HepG2 (cell line): ENCODE measurements at regions of chr2 and their contacts with region 1.

Region 1: DNA sequence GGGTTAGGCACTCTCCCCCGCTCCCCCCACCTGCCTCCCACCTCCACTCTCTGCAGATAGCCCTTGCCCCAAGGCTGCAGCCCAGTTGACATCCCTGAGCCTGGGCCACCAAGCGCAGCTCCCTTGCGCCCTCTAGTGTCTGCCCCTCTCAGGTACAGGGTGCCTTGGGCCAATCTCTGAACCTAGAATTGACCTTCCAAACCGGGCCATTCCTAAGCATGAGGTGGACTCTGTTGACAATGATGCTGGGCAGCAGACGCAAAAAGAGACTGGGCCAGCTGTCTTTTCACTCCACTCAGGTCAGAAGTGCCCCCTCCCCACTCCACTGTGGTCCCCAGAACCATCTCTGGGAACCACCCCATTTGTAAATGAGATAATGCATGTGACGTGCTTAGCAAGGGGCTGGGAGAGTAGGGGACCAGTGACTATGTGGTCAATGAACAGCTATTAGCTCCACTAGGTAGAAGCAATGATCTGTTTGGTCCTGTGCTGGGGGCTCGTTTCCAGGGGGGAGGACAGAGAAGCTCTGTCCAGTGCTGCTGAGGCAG is 43.3 kb upstream of the PLB1 start:
- DNase-seq: peak; percentile 58
- ATAC-seq: peak; percentile 92
- H3K4me3 ChIP-seq: no peak overlapping the region
- H3K27ac ChIP-seq: no peak overlapping the region
- H3K4me1 ChIP-seq: no peaks in the 10 kb centered on the region
- H3K27me3 ChIP-seq: peaks cover 0 to 7% of the 10 kb centered on the region in 2 experiments; a peak in 3 of 5 replicates
- CTCF ChIP-seq: peak; percentile 99
- EP300 ChIP-seq: no peak
- POLR2A ChIP-seq: no peak
- RAD21 ChIP-seq: peak; percentile 91

Region 2: DNA sequence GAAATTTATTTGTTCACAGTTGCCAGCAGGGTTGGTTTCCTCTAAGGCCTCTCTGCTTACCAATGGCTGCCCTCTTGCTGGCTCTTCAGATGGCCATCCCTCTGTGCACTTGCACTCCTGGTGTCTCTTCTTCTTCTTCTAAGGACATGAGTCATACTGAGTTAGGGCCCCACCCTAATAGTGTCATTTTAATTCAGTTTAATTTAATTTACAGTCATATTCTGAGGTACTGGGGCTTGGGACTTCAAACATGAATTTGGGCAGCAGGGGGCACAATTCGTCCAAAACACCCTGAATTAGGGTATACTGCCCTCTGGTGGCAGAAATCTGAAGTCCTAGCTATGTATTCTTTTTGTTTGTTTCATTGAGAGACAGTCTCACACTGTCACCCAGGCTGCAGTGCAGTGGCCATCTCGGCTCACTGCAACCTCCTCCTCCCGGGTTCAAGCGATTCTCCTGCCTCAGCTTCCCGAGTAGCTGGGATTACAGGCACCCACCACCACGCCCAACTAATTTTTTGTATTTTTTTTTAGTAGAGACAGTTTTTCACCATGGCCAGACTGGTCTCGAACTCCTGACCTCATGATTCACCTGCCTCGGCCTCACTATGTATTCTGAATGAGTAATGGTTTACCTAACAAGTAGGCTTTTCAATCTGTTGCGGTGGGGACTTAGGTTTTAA is 769.1 kb before region 1 on chr2:
- CTCF ChIA-PET with region 1: interaction called, 15 read pairs
- POLR2A ChIA-PET with region 1: no interaction called
- in situ Hi-C with region 1: no loop called
- intact Hi-C with region 1: loop called (anchors 2 kb)
- DNase-seq: peak; percentile 97
- ATAC-seq: peak; percentile 96
- H3K4me3 ChIP-seq: no peak overlapping the region
- H3K27ac ChIP-seq: peak overlapping the region; percentile 7
- H3K4me1 ChIP-seq: peaks cover 11% of the 10 kb centered on the region
- H3K27me3 ChIP-seq: no peaks in the 10 kb centered on the region
- CTCF ChIP-seq: peak; percentile 97
- EP300 ChIP-seq: 0 out of 4 replicates have a peak, but pooled peaks of 1 of the 2 experiments have one; percentile 14
- POLR2A ChIP-seq: no peak
- RAD21 ChIP-seq: peak; percentile 82

Region 3: GRCh38 chr2:27807476-27807875 is 645.1 kb before region 1 on chr2:
- CTCF ChIA-PET with region 1: interaction called, 5 read pairs
- POLR2A ChIA-PET with region 1: no interaction called
- in situ Hi-C with region 1: no loop called
- intact Hi-C with region 1: loop called (anchors 1 kb)
- DNase-seq: peak; percentile 36
- ATAC-seq: peak; percentile 95
- H3K4me3 ChIP-seq: no peak overlapping the region
- H3K27ac ChIP-seq: no peak overlapping the region
- H3K4me1 ChIP-seq: peaks cover 15% of the 10 kb centered on the region
- H3K27me3 ChIP-seq: no peaks in the 10 kb centered on the region
- CTCF ChIP-seq: peak; percentile 73
- EP300 ChIP-seq: no peak
- POLR2A ChIP-seq: no peak
- RAD21 ChIP-seq: peak; percentile 78